H1 (cell line): ENCODE measurements at regions of chr1 and their contacts with region 1.

Region 1: GRCh38 chr1:161098210-161099068 is at the start of gene KLHDC9:
- DNase-seq: peak in 1 of 2 experiments; percentile 87
- H3K4me3 ChIP-seq: peak within 1 kb of the TSS; percentile 63 to 89 (median 71)
- H3K27ac ChIP-seq: no peak within 1 kb of the TSS
- H3K4me1 ChIP-seq: peaks cover 0 to 6% (median 0%) of the 10 kb centered on the region in 4 experiments; a peak in 2 of 7 replicates
- H3K27me3 ChIP-seq: no peaks in the 10 kb centered on the region
- CTCF ChIP-seq: peak in 2 of 3 experiments; percentile 30 to 37; a peak in 3 of 4 replicates
- EP300 ChIP-seq: peak in 1 of 2 experiments; percentile 33; a peak in 1 of 3 replicates
- POLR2A ChIP-seq: peak in 1 of 2 experiments; percentile 51; a peak in 1 of 3 replicates
- RAD21 ChIP-seq: peak; percentile 5 to 12; a peak in 1 of 4 replicates
- total RNA-seq, gene KLHDC9: 4.0 and 6.5 TPM in 2 replicates

Region 2: GRCh38 chr1:160997323-160998038 is 101.0 kb before region 1 on chr1:
- CTCF ChIA-PET with region 1: interaction called, 27 read pairs
- POLR2A ChIA-PET with region 1: no interaction called
- DNase-seq: no peak
- H3K4me3 ChIP-seq: no peak overlapping the region
- H3K27ac ChIP-seq: no peak overlapping the region
- H3K4me1 ChIP-seq: peaks cover 0 to 3% (median 0%) of the 10 kb centered on the region in 4 experiments; a peak in 1 of 7 replicates
- H3K27me3 ChIP-seq: no peaks in the 10 kb centered on the region
- CTCF ChIP-seq: peak; percentile 57 to 77 (median 71)
- EP300 ChIP-seq: no peak
- POLR2A ChIP-seq: no peak
- RAD21 ChIP-seq: peak; percentile 63 to 80

Region 3: GRCh38 chr1:161021165-161021960 is 77.1 kb before region 1 on chr1:
- CTCF ChIA-PET with region 1: interaction called, 12 read pairs
- POLR2A ChIA-PET with region 1: interaction called, 6 read pairs
- DNase-seq: peak; percentile 93 to 99
- H3K4me3 ChIP-seq: peak overlapping the region; percentile 79 to 97 (median 95)
- H3K27ac ChIP-seq: peak overlapping the region; percentile 74; the same call in 1 of the 2 replicates
- H3K4me1 ChIP-seq: peaks cover 7 to 17% (median 13%) of the 10 kb centered on the region in 4 experiments
- H3K27me3 ChIP-seq: no peaks in the 10 kb centered on the region
- CTCF ChIP-seq: no peak; a peak in 1 of 4 replicates
- EP300 ChIP-seq: no peak; a peak in 1 of 3 replicates
- POLR2A ChIP-seq: peak; percentile 87 to 95
- RAD21 ChIP-seq: no peak; a peak in 1 of 4 replicates

Region 4: GRCh38 chr1:161045750-161046571 is 52.5 kb before region 1 on chr1 and contains the start of gene USF1:
- CTCF ChIA-PET with region 1: interaction called, 73 read pairs
- POLR2A ChIA-PET with region 1: interaction called, 12 read pairs
- DNase-seq: peak; percentile 86 to 93
- H3K4me3 ChIP-seq: peak within 1 kb of the TSS; percentile 75 to 98 (median 87)
- H3K27ac ChIP-seq: peak within 1 kb of the TSS; percentile 97
- H3K4me1 ChIP-seq: peaks cover 0 to 4% (median 1%) of the 10 kb centered on the region in 4 experiments; a peak in 2 of 7 replicates
- H3K27me3 ChIP-seq: peaks cover 0 to 17% (median 8%) of the 10 kb centered on the region in 4 experiments; a peak in 6 of 7 replicates
- CTCF ChIP-seq: no peak
- EP300 ChIP-seq: no peak
- POLR2A ChIP-seq: peak; percentile 78 to 96
- RAD21 ChIP-seq: no peak
- total RNA-seq, gene USF1: 68.9 and 74.6 TPM in 2 replicates

Region 5: GRCh38 chr1:161117759-161118581 is 19.5 kb after region 1 on chr1 and contains the starts of genes NIT1 and PFDN2:
- CTCF ChIA-PET with region 1: interaction called, 33 read pairs
- POLR2A ChIA-PET with region 1: interaction called, 6 read pairs
- DNase-seq: peak; percentile 72 to 96
- H3K4me3 ChIP-seq: peak within 1 kb of the TSS; percentile 84 to 99 (median 93)
- H3K27ac ChIP-seq: peak within 1 kb of the TSS; percentile 85
- H3K4me1 ChIP-seq: peaks cover 4 to 10% (median 5%) of the 10 kb centered on the region in 4 experiments; a peak in 6 of 7 replicates
- H3K27me3 ChIP-seq: no peaks in the 10 kb centered on the region
- CTCF ChIP-seq: no peak
- EP300 ChIP-seq: no peak
- POLR2A ChIP-seq: peak in 1 of 2 experiments; percentile 70; a peak in 2 of 3 replicates
- RAD21 ChIP-seq: no peak
- total RNA-seq, gene NIT1: 40.4 and 40.6 TPM in 2 replicates
- total RNA-seq, gene PFDN2: 71.2 and 74.7 TPM in 2 replicates

Region 6: DNA sequence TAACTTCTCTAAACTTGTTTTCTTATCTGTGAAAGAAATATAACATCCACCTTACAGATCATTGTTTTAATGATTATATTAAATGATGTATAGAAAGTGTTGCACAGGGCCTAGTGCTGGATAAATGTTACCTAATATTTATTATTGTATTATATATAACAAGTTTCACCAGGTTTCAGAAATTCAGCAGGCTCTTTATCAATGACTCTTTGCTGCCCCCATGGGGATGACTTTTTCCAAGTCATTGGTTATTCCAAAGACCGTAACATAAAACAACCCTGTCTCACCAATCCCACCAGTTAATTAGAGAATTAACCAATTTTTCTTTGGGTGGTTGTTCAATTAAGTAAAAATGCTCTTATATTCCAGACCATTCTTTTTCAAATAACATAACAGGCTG is 41.3 kb after region 1 on chr1:
- CTCF ChIA-PET with region 1: interaction called, 58 read pairs
- POLR2A ChIA-PET with region 1: interaction called, 32 read pairs
- DNase-seq: no peak
- H3K4me3 ChIP-seq: no peak overlapping the region
- H3K27ac ChIP-seq: no peak overlapping the region
- H3K4me1 ChIP-seq: no peaks in the 10 kb centered on the region
- H3K27me3 ChIP-seq: no peaks in the 10 kb centered on the region
- CTCF ChIP-seq: peak in 2 of 3 experiments; percentile 24 to 43; a peak in 2 of 4 replicates
- EP300 ChIP-seq: no peak
- POLR2A ChIP-seq: no peak
- RAD21 ChIP-seq: peak; percentile 60 to 68

Region 7: GRCh38 chr1:161486806-161487741 is 388.6 kb after region 1 on chr1:
- CTCF ChIA-PET with region 1: no interaction called
- POLR2A ChIA-PET with region 1: no interaction called
- DNase-seq: no peak
- H3K4me3 ChIP-seq: no peak overlapping the region
- H3K27ac ChIP-seq: no peak overlapping the region
- H3K4me1 ChIP-seq: no peaks in the 10 kb centered on the region
- H3K27me3 ChIP-seq: peaks cover 0 to under 1% (median 0%) of the 10 kb centered on the region in 4 experiments; a peak in 2 of 7 replicates
- CTCF ChIP-seq: peak in 2 of 3 experiments; percentile 65; a peak in 3 of 4 replicates
- EP300 ChIP-seq: no peak
- POLR2A ChIP-seq: no peak
- RAD21 ChIP-seq: peak; percentile 79 to 80